GM12878 (cell line): ENCODE measurements at regions of chr11 and their contacts with region 1.

Region 1: DNA sequence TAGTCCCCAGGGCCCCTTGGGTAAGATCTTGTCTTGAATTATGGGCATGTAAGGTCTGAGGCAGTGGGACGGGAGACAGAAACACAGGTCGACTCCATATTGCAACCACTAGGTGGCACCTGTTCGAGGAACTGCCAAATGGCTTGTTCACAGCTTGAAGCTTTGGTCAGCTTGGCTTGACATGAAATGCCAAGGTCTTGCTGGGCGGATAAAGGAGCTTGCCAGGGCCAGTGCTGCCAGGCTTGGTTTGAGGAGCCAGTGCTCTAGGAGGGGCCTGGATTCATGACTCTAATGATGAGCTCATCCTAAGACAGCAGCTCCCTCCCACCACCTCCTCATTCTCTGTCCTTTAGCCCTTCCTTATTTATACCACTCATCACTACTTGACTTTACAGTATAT is 11.9 kb upstream of the NRIP3 start:
- DNase-seq: peak; percentile 31
- ATAC-seq: peak; percentile 99
- H3K4me3 ChIP-seq: no peak overlapping the region
- H3K27ac ChIP-seq: no peak overlapping the region
- H3K4me1 ChIP-seq: no peaks in the 10 kb centered on the region; the same call in none of the 2 replicates
- H3K27me3 ChIP-seq: no peaks in the 10 kb centered on the region; a peak in 1 of 4 replicates
- CTCF ChIP-seq: peak; percentile 77 to 90 (median 81)
- EP300 ChIP-seq: no peak
- POLR2A ChIP-seq: no peak
- RAD21 ChIP-seq: peak; percentile 77

Region 2: DNA sequence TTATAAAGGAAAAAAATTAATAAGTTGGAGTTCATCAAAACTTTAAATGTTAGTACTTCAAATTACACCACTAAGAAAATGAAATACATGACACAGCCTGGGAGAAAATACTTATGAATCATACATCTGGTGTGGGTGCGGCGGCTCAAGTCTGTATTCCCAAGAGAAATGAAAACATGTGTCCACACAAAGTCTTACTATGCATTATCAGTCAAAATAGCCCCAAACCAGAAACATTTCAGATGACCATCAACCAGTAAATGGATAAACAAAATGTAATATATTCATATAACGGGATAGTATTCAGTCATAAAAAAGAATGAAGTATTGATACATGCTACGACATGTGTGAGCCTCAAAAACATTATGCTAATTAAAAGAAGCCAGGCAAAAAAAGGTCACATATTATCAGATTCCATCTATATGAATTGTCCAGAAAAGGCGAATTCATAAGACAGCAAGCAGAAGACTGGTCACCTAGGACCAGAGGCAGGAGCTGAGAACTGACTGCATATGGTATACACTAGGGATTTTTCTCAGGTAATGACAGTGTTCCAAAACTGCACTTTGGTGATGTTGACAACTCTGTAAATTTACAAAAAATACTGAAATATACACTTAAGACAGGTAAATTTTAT is 110.0 kb before region 1 on chr11:
- CTCF ChIA-PET with region 1: no interaction called
- POLR2A ChIA-PET with region 1: no interaction called
- RAD21 ChIA-PET with region 1: no interaction called
- SMC1A ChIA-PET with region 1: no interaction called
- in situ Hi-C with region 1: no loop called
- intact Hi-C with region 1: no loop called
- DNase-seq: no peak
- ATAC-seq: no peak
- H3K4me3 ChIP-seq: no peak overlapping the region
- H3K27ac ChIP-seq: no peak overlapping the region
- H3K4me1 ChIP-seq: no peaks in the 10 kb centered on the region
- H3K27me3 ChIP-seq: no peaks in the 10 kb centered on the region; a peak in 1 of 4 replicates
- CTCF ChIP-seq: no peak
- EP300 ChIP-seq: no peak
- POLR2A ChIP-seq: no peak
- RAD21 ChIP-seq: no peak

Region 3: DNA sequence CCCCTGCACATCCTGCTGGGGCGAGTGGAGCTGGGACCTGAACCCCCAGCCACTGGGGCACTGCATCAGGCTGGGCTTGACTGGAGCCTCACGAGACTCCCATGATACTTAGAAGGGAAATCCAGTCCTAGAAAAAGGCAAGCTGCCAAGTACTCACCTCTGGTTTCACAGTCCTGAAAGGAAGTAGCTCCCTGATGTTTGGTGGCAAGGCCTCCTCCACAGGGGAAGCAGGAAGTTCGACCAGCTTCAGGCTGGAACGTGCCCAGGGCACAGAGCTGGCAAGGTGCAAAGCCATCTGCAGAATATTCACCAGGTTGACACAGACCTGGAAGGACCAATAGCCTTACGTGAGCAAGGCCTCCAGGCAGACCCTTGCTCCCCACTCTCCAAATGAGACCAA is 14.9 kb after region 1 on chr11:
- CTCF ChIA-PET with region 1: interaction called, 50 read pairs
- POLR2A ChIA-PET with region 1: no interaction called
- RAD21 ChIA-PET with region 1: interaction called, 3 read pairs
- SMC1A ChIA-PET with region 1: interaction called, 19 read pairs
- in situ Hi-C with region 1: no loop called
- intact Hi-C with region 1: no loop called
- DNase-seq: no peak
- ATAC-seq: no peak
- H3K4me3 ChIP-seq: no peak overlapping the region
- H3K27ac ChIP-seq: no peak overlapping the region
- H3K4me1 ChIP-seq: no peaks in the 10 kb centered on the region
- H3K27me3 ChIP-seq: no peaks in the 10 kb centered on the region; a peak in 1 of 4 replicates
- CTCF ChIP-seq: no peak
- EP300 ChIP-seq: no peak
- POLR2A ChIP-seq: no peak
- RAD21 ChIP-seq: no peak

Region 4: DNA sequence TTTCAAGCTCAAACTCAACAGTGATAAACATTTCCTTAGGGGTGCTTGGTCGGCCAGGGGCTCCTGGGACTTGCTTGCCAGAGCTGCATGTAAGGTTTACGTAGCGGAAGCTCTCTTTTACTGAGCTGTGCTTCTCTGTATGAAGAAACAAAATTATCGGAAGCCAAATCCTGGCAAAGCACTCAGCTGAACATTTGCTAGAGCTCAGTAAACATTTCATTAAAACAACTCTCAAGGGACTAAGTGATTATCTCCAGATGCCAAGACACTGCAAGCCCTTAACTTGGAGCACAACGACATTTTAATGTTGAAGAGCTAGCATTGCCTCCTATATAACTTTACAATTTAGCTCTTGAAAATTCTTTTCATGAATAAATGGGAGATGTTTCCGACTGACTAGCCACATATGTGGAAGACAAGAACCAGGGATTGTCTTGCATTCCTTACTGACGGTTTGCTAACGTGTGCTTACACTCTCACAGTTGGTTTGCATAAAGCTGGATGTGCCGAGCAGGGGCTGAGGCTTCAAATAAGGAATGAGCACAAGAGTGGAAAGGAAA is 32.4 kb after region 1 on chr11:
- CTCF ChIA-PET with region 1: interaction called, 13 read pairs
- POLR2A ChIA-PET with region 1: no interaction called
- RAD21 ChIA-PET with region 1: interaction called, 6 read pairs
- SMC1A ChIA-PET with region 1: interaction called, 7 read pairs
- in situ Hi-C with region 1: no loop called
- intact Hi-C with region 1: no loop called
- DNase-seq: no peak
- ATAC-seq: no peak
- H3K4me3 ChIP-seq: no peak overlapping the region
- H3K27ac ChIP-seq: no peak overlapping the region
- H3K4me1 ChIP-seq: no peaks in the 10 kb centered on the region
- H3K27me3 ChIP-seq: no peaks in the 10 kb centered on the region
- CTCF ChIP-seq: no peak
- EP300 ChIP-seq: no peak
- POLR2A ChIP-seq: no peak
- RAD21 ChIP-seq: no peak

Region 5: DNA sequence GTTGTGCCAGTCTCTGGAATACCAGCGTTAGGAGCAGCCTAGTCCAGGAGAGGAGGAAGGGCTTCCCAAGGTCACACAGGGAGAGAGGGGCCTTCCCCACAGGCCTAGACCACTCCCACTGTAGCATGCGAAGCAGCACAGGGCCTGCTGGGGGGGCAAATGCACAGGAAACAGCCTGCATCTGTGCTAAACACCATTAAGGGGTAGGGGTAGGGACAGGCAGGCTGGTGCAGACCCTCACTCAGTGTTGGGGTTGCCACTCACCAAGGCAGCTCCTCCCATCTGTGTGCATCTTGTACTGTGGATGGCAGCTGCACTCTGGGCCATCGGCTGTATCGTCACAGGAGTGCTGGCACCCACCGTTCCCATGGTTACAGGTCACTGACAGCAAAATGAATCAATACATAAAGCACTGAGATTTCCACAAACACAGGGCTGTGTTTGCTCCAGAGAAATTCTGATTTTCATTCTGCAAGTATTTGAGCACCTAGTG is 50.8 kb after region 1 on chr11:
- CTCF ChIA-PET with region 1: interaction called, 15 read pairs
- POLR2A ChIA-PET with region 1: no interaction called
- RAD21 ChIA-PET with region 1: interaction called, 4 read pairs
- SMC1A ChIA-PET with region 1: interaction called, 29 read pairs
- in situ Hi-C with region 1: no loop called
- intact Hi-C with region 1: loop called (anchors 2 kb)
- DNase-seq: no peak
- ATAC-seq: no peak
- H3K4me3 ChIP-seq: no peak overlapping the region
- H3K27ac ChIP-seq: no peak overlapping the region
- H3K4me1 ChIP-seq: peaks cover 6% of the 10 kb centered on the region
- H3K27me3 ChIP-seq: no peaks in the 10 kb centered on the region
- CTCF ChIP-seq: no peak
- EP300 ChIP-seq: no peak
- POLR2A ChIP-seq: no peak
- RAD21 ChIP-seq: no peak

Region 6: GRCh38 chr11:9099617-9100016 is 83.9 kb after region 1 on chr11:
- CTCF ChIA-PET with region 1: interaction called, 107 read pairs
- POLR2A ChIA-PET with region 1: no interaction called
- RAD21 ChIA-PET with region 1: interaction called, 47 read pairs
- SMC1A ChIA-PET with region 1: interaction called, 48 read pairs
- in situ Hi-C with region 1: no loop called
- intact Hi-C with region 1: loop called (anchors 10 kb)
- DNase-seq: no peak
- ATAC-seq: no peak
- H3K4me3 ChIP-seq: no peak overlapping the region
- H3K27ac ChIP-seq: no peak overlapping the region
- H3K4me1 ChIP-seq: no peaks in the 10 kb centered on the region
- H3K27me3 ChIP-seq: no peaks in the 10 kb centered on the region; a peak in 1 of 4 replicates
- CTCF ChIP-seq: no peak
- EP300 ChIP-seq: no peak
- POLR2A ChIP-seq: no peak
- RAD21 ChIP-seq: no peak

Region 7: GRCh38 chr11:9130297-9130696 is 114.6 kb after region 1 on chr11:
- CTCF ChIA-PET with region 1: interaction called, 323 read pairs
- POLR2A ChIA-PET with region 1: no interaction called
- RAD21 ChIA-PET with region 1: interaction called, 7 read pairs
- SMC1A ChIA-PET with region 1: interaction called, 16 read pairs
- in situ Hi-C with region 1: loop called (anchors 5 kb)
- intact Hi-C with region 1: no loop called
- DNase-seq: no peak
- ATAC-seq: peak; percentile 72
- H3K4me3 ChIP-seq: no peak overlapping the region
- H3K27ac ChIP-seq: no peak overlapping the region
- H3K4me1 ChIP-seq: no peaks in the 10 kb centered on the region
- H3K27me3 ChIP-seq: no peaks in the 10 kb centered on the region
- CTCF ChIP-seq: peak in 2 of 3 experiments; percentile 15 to 16; a peak in 2 of 6 replicates
- EP300 ChIP-seq: no peak
- POLR2A ChIP-seq: no peak
- RAD21 ChIP-seq: no peak